Activated naive CD4-positive, alpha-beta T cell treated with anti-CD3 and anti-CD28 coated beads, Interleukin-2, amount 10 ng/mL, durations not matched to agents 7 days and 5 days (primary cell): ENCODE measurements at regions of chr22 and their contacts with region 1.

Region 1: GRCh38 chr22:39532215-39533071 is at the start of gene RPS19BP1:
- DNase-seq: peak; percentile 100
- H3K4me3 Mint-ChIP-seq: peak within 1 kb of the TSS; percentile 98
- H3K27ac Mint-ChIP-seq: peak within 1 kb of the TSS; percentile 93
- H3K4me1 Mint-ChIP-seq: peaks cover 64% of the 10 kb centered on the region
- H3K27me3 Mint-ChIP-seq: no peaks in the 10 kb centered on the region

Region 2: DNA sequence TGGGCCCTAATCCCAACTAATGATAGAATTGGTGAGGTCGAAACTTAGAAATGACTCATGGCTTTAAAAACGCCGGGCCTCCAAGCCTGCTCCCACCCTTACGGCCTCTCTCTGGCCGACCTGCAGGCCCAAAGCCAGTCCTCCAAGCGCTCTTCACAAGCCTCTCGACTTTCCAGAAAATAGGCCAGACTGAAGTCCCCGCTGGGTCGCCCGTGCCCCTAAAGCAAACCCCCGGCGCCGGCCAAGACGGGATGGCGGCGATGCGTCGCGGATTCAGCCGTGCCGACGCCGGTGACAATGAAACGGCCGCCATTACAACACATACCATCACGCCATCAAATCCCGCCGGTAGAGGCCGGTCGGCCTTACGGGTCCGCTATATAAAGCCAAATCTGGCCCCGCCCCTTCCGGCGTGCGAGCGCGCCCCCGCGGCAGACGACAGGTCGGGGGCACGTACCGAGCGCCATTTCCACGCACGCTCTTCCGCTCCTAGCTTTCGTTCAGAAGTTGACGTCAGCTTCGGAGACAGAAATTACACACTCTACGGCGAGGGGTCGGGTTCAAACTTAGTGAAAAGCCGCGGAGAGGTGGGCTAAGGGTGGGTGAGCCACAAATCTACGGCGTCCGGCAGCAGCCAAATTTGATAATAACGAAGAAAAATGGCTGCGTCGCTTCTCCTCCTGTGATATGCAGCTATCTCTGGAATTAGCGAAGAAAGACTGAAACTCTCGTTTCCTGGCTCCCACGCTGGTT is 213.0 kb before region 1 on chr22 and contains the start of gene RPL3:
- CTCF ChIA-PET with region 1: interaction called, 17 read pairs
- DNase-seq: peak; percentile 96
- H3K4me3 Mint-ChIP-seq: peak within 1 kb of the TSS; percentile 92
- H3K27ac Mint-ChIP-seq: peak within 1 kb of the TSS; percentile 98
- H3K4me1 Mint-ChIP-seq: peaks cover 49% of the 10 kb centered on the region
- H3K27me3 Mint-ChIP-seq: peaks cover 4% of the 10 kb centered on the region

Region 3: DNA sequence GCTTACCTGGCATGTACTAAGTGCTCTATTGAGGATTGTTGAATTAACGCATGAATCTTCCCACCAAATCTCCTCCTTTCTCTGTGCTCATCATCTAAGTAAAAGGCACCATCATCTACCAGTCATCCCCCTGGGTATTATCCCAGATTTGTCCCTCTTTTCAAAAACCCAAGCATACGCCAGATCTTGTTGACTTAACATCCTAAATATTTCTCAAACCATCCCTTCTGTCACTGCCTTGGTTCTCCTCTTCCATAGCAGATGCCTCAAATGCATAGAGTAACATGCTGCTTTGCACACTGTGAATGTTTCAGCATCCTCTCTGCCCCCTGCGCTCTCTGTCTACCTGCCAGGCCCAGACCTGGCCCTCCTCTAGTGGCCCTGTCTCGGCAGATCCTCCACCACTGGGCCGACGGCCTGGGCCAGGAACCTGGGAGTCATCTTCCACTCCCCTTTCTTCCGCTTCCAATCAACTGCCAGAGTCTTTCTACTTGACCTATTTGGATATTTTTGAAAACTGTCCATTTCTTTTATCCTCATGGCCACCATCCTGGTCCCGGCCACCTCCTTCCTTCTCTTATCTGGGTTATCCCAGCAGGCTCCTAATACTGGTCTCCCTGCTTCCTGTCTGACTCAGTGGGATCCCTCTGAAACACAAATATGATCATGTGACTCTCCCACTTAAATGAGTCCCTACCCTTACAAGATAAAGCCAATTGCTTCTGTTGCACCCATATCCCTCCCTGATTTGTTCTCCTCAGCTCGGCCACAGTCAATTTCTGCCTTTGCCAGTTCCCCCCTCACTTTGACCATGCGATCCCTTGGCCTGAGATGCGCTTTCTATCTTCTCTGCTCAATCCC is 136.3 kb before region 1 on chr22:
- CTCF ChIA-PET with region 1: interaction called, 10 read pairs
- DNase-seq: no peak
- H3K4me3 Mint-ChIP-seq: no peak overlapping the region
- H3K27ac Mint-ChIP-seq: no peak overlapping the region
- H3K4me1 Mint-ChIP-seq: peaks cover 16% of the 10 kb centered on the region
- H3K27me3 Mint-ChIP-seq: peaks cover 9% of the 10 kb centered on the region

Region 4: DNA sequence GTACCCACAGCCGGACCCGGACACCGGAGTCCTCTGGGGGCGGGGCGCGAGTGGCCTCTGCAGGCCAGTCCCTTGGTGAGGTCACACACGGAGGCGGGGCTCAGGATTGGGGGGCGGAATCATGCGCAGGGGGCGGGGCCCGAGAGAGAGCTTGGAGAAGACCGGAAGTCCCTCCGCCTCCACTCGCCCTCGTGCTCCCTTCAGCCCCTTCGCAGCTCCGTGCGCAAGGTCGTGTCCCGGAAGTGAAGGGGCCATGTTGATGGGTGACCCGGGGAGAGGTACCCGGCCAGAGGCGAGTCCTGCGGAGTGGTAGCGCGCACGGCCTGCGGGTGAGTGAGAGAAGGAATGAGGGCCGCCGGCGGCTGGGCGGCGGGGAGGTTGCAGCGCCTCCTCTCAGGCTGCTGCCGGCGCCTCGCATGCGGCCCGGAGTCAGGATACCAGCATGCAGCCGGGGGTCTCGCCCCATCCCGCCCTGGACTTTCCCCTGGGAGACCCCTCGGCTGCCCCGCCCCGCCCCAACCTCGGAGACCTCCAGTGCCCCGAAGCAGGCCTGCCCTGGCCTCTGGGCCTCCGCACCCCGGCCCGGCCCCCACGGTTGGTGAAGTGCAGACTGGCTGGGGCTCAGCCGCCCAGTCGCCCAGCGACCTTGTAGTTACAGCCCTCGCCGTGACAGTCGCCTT is 30.2 kb before region 1 on chr22 and contains the start of gene MIEF1:
- CTCF ChIA-PET with region 1: interaction called, 216 read pairs
- DNase-seq: peak; percentile 94
- H3K4me3 Mint-ChIP-seq: peak within 1 kb of the TSS; percentile 93
- H3K27ac Mint-ChIP-seq: peak within 1 kb of the TSS; percentile 88
- H3K4me1 Mint-ChIP-seq: peaks cover 43% of the 10 kb centered on the region
- H3K27me3 Mint-ChIP-seq: peaks cover 21% of the 10 kb centered on the region

Region 5: GRCh38 chr22:39674536-39674935 is 142.1 kb after region 1 on chr22:
- CTCF ChIA-PET with region 1: no interaction called
- DNase-seq: no peak
- H3K4me3 Mint-ChIP-seq: no peak overlapping the region
- H3K27ac Mint-ChIP-seq: no peak overlapping the region
- H3K4me1 Mint-ChIP-seq: no peaks in the 10 kb centered on the region
- H3K27me3 Mint-ChIP-seq: peaks cover 12% of the 10 kb centered on the region

Region 6: DNA sequence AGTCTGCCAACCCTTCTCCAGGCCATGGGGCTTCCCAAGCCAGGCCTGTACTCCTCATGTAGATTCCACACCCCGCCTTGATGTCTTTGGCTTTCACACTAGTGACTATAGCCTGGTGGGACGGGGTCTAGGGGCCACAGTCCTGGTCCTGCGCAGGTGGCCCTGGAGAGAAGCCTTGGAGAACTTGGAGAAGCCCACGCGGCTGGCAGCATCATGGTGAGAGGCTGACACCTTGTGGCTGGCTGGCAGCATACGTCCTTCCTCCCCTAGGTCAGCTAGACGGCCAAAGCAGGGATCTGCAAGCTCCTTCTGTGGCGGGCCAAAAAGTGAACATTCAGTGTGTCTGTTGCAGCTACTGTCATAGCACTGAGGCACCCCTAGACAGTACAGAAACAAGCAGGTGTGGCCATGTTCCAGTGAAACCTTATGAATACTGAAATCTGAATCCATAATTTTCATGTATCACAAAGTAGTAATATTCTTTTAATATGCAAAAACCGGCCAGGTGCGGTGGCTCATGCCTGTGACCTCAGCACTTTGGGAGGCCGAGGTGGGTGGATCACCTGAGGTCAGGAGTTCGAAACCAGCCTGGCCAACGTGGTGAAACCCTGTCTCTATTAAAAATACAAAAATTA is 504.3 kb after region 1 on chr22:
- CTCF ChIA-PET with region 1: interaction called, 33 read pairs
- DNase-seq: peak; percentile 71
- H3K4me3 Mint-ChIP-seq: no peak overlapping the region
- H3K27ac Mint-ChIP-seq: no peak overlapping the region
- H3K4me1 Mint-ChIP-seq: peaks cover 5% of the 10 kb centered on the region
- H3K27me3 Mint-ChIP-seq: peaks cover 60% of the 10 kb centered on the region